ENCODE measurements at regions of chr2 and their contacts with region 1.

Region 1: GRCh38 chr2:113203901-113204519 is 30.2 kb downstream of the PSD4 start:
- DNase-seq: peak; percentile 52 to 87 (median 71)
- ATAC-seq: peak; percentile 83 to 91 (median 84)
- H3K4me3 ChIP-seq: no peak overlapping the region
- H3K4me3 Mint-ChIP-seq: peak overlapping the region in 1 of 3 donors; percentile 40
- H3K27ac ChIP-seq: peak overlapping the region; percentile 67
- H3K27ac Mint-ChIP-seq: peak overlapping the region; percentile 93 to 95
- H3K4me1 ChIP-seq: peaks cover 0 to 21% of the 10 kb centered on the region in 2 experiments
- H3K4me1 Mint-ChIP-seq: peaks cover 18 to 35% (median 26%) of the 10 kb centered on the region in 3 donors
- H3K27me3 ChIP-seq: no peaks in the 10 kb centered on the region
- H3K27me3 Mint-ChIP-seq: no peaks in the 10 kb centered on the region

Region 2: GRCh38 chr2:113050921-113051895 is 152.8 kb before region 1 on chr2:
- CTCF ChIA-PET with region 1: no interaction called
- POLR2A ChIA-PET with region 1: no interaction called
- DNase-seq: peak in 1 of 35 experiments; percentile 2
- ATAC-seq: no peak
- H3K4me3 ChIP-seq: no peak overlapping the region
- H3K4me3 Mint-ChIP-seq: no peak overlapping the region
- H3K27ac ChIP-seq: no peak overlapping the region
- H3K27ac Mint-ChIP-seq: no peak overlapping the region
- H3K4me1 ChIP-seq: no peaks in the 10 kb centered on the region
- H3K4me1 Mint-ChIP-seq: no peaks in the 10 kb centered on the region
- H3K27me3 ChIP-seq: peaks cover 0 to 11% of the 10 kb centered on the region in 2 experiments
- H3K27me3 Mint-ChIP-seq: peaks cover 0 to 4% of the 10 kb centered on the region in 2 donors

Region 3: GRCh38 chr2:113234721-113235346 is 30.8 kb after region 1 on chr2:
- CTCF ChIA-PET with region 1: interaction called in 1 of 2 experiments, 10 read pairs
- POLR2A ChIA-PET with region 1: interaction called, 4 to 9 read pairs
- DNase-seq: no peak
- ATAC-seq: peak in 3 of 4 experiments; percentile 8 to 13 (median 8)
- H3K4me3 ChIP-seq: peak overlapping the region; percentile 19 to 57
- H3K4me3 Mint-ChIP-seq: peak overlapping the region; percentile 89 to 92 (median 91)
- H3K27ac ChIP-seq: no peak overlapping the region
- H3K27ac Mint-ChIP-seq: peak overlapping the region; percentile 55 to 96
- H3K4me1 ChIP-seq: peaks cover 0 to 7% of the 10 kb centered on the region in 2 experiments
- H3K4me1 Mint-ChIP-seq: peaks cover 26 to 33% (median 27%) of the 10 kb centered on the region in 3 donors
- H3K27me3 ChIP-seq: peaks cover 0 to 3% of the 10 kb centered on the region in 2 experiments
- H3K27me3 Mint-ChIP-seq: no peaks in the 10 kb centered on the region

Region 4: GRCh38 chr2:113248997-113249770 is 45.2 kb after region 1 on chr2:
- CTCF ChIA-PET with region 1: interaction called, 11 to 12 read pairs
- POLR2A ChIA-PET with region 1: interaction called in 1 of 2 experiments, 3 read pairs
- DNase-seq: peak; percentile 42 to 89 (median 68)
- ATAC-seq: peak; percentile 44 to 68 (median 46)
- H3K4me3 ChIP-seq: no peak overlapping the region
- H3K4me3 Mint-ChIP-seq: peak overlapping the region in 1 of 3 donors; percentile 79
- H3K27ac ChIP-seq: peak overlapping the region; percentile 42
- H3K27ac Mint-ChIP-seq: peak overlapping the region; percentile 91 to 93
- H3K4me1 ChIP-seq: peaks cover 37 to 41% of the 10 kb centered on the region in 2 experiments
- H3K4me1 Mint-ChIP-seq: peaks cover 51 to 55% (median 52%) of the 10 kb centered on the region in 3 donors
- H3K27me3 ChIP-seq: no peaks in the 10 kb centered on the region
- H3K27me3 Mint-ChIP-seq: no peaks in the 10 kb centered on the region

Region 5: GRCh38 chr2:113370478-113371091 is 166.6 kb after region 1 on chr2:
- CTCF ChIA-PET with region 1: interaction called, 5 to 10 read pairs
- POLR2A ChIA-PET with region 1: no interaction called
- DNase-seq: peak; percentile 40 to 79 (median 59)
- ATAC-seq: peak; percentile 89 to 97 (median 94)
- H3K4me3 ChIP-seq: no peak overlapping the region
- H3K4me3 Mint-ChIP-seq: no peak overlapping the region
- H3K27ac ChIP-seq: no peak overlapping the region
- H3K27ac Mint-ChIP-seq: peak overlapping the region in 1 of 2 donors; percentile 64
- H3K4me1 ChIP-seq: peaks cover 0 to 3% of the 10 kb centered on the region in 2 experiments
- H3K4me1 Mint-ChIP-seq: peaks cover 5 to 8% (median 6%) of the 10 kb centered on the region in 3 donors
- H3K27me3 ChIP-seq: no peaks in the 10 kb centered on the region
- H3K27me3 Mint-ChIP-seq: peaks cover 0 to 2% of the 10 kb centered on the region in 2 donors

Region 6: GRCh38 chr2:113390124-113390849 is 186.3 kb after region 1 on chr2:
- CTCF ChIA-PET with region 1: interaction called, 4 to 22 read pairs
- POLR2A ChIA-PET with region 1: no interaction called
- DNase-seq: peak; percentile 8 to 86 (median 44)
- ATAC-seq: peak; percentile 87 to 97 (median 90)
- H3K4me3 ChIP-seq: peak overlapping the region in 1 of 2 donors; percentile 40
- H3K4me3 Mint-ChIP-seq: peak overlapping the region; percentile 71 to 74 (median 73)
- H3K27ac ChIP-seq: no peak overlapping the region
- H3K27ac Mint-ChIP-seq: peak overlapping the region; percentile 73 to 78
- H3K4me1 ChIP-seq: peaks cover 2 to 4% of the 10 kb centered on the region in 2 experiments
- H3K4me1 Mint-ChIP-seq: peaks cover 6 to 15% (median 9%) of the 10 kb centered on the region in 3 donors
- H3K27me3 ChIP-seq: no peaks in the 10 kb centered on the region
- H3K27me3 Mint-ChIP-seq: peaks cover 7 to 15% of the 10 kb centered on the region in 2 donors

Measured in T-cell (primary cell).